Activated CD4-positive, alpha-beta T cell treated with anti-CD3 and anti-CD28 coated beads for 36 hours (primary cell): ENCODE measurements at regions of chr15 and their contacts with region 1.

Region 1: GRCh38 chr15:52558196-52558595 is 10.6 kb downstream of the ARPP19 start:
- DNase-seq: peak; percentile 83
- ATAC-seq: peak; percentile 82
- H3K4me3 Mint-ChIP-seq: peak overlapping the region; percentile 63
- H3K27ac Mint-ChIP-seq: peak overlapping the region; percentile 96
- H3K4me1 Mint-ChIP-seq: peaks cover 66% of the 10 kb centered on the region
- H3K27me3 Mint-ChIP-seq: no peaks in the 10 kb centered on the region

Region 2: DNA sequence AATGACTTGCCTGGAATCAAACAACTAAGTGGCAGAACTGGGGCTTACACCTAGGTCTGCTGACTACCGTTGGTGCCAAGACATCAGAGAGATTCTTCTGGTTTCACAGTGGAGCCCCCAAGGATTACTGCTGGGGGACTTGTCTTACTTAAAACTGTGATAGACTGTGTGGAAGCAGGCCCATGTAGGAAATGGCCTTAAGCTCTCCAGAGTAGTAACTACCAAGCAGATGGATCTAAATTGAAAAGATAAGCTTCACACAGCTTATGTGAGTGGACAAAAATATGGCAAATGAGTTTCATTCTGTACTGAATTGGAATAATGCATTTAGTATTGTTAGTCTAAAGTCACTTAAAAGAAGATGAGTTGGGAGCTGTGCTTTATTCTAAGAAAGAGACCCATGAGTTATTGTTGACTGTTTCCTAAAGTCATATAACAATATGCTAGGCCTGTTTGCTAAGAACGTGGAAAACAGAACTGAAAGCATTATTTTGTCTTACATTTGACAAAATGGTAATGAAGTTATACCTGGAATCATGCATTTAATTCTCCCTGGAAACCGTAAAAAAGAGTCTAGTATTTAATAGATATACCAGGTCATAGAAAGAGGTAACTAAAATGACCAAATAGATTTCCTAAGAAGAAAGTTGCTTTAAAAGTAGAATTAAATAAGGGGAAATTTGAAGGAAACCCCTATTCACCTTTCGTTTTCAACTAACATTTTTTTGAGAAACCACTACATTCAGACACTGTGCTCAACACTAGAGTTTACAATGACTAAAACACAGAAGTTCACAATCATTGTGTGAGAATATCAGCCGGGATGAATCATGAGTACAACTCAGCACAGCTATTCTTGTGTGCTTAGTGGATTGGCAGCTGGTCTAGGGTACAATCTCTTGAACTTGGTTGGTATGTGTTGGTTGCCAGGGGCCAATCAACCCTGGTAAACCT is 552.2 kb before region 1 on chr15:
- CTCF ChIA-PET with region 1: no interaction called
- POLR2A ChIA-PET with region 1: no interaction called
- intact Hi-C with region 1: loop called (anchors 2 to 5 kb)
- DNase-seq: peak; percentile 54
- ATAC-seq: peak; percentile 90
- H3K4me3 Mint-ChIP-seq: peak overlapping the region; percentile 6
- H3K27ac Mint-ChIP-seq: peak overlapping the region; percentile 56
- H3K4me1 Mint-ChIP-seq: peaks cover 64% of the 10 kb centered on the region
- H3K27me3 Mint-ChIP-seq: no peaks in the 10 kb centered on the region

Region 3: DNA sequence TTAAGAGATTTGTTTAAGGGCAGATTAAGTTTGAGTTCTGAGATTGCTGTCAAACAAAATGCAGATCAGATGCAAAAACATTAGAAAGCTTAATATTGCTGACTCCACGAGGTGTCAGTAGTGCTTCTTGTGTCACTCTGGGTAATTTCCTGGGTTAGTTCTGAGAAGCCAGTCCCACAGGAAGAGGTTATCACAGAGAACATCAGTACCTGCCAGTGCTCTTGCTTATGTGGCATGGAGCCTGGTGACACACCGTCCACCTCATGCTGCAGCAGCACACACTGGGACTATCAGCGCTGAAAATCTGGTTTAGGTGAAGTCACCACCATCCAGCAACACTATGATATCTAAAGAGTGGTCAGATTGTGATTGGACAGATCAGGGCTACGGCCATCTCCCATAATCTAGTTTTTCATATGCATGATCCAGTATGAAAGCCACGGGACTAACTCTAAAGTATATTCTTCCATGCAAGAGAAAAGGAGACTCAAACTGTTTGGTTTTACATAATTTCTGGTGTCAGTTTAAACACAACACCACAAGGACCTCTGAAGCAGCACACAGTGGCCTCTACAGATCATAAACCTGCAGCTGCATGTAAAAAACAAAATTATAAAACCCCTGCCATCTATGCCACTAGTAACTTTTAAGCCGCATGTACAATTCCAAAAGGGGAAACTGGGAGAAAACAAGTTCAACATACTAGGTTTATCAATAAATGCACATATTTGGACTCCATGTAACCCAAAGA is 226.5 kb before region 1 on chr15:
- CTCF ChIA-PET with region 1: interaction called, 3 read pairs
- POLR2A ChIA-PET with region 1: no interaction called
- intact Hi-C with region 1: loop called in 1 of 2 experiments (anchors 2 kb)
- DNase-seq: peak; percentile 66
- ATAC-seq: peak; percentile 99
- H3K4me3 Mint-ChIP-seq: no peak overlapping the region
- H3K27ac Mint-ChIP-seq: peak overlapping the region; percentile 28
- H3K4me1 Mint-ChIP-seq: peaks cover 12% of the 10 kb centered on the region
- H3K27me3 Mint-ChIP-seq: no peaks in the 10 kb centered on the region

Region 4: DNA sequence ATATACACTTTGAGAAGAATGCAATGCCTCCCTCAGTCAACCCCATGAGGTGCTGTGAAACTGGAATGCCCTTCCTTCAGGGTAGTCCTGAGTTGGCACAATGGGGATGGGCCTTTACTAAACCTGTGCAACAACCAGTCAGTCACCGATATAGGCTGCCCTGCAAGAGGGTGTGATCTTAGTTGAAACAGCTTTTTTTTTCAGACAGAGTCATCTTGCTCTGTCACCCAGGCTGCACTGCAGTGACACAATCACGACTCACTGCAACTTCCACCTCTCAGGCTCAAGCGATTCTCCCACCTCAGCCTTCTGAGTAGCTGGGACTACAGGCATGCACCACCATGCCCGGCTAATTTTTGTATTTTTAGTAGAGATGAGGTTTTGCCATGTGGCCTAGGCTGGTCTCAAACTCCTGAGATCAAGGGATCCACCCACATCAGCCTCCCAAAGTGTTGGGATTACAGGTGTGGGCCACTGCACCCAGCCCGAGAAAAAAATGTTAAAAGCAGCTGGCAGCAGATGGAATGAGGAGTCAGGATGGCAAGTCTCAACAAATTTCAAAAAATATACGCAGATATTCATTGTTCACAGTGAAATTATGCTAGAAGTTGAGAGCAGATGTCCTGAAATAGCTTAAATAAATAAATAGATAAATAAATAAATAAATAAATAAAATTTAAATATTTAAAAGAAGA is 61.3 kb before region 1 on chr15:
- CTCF ChIA-PET with region 1: interaction called, 4 read pairs
- POLR2A ChIA-PET with region 1: no interaction called
- intact Hi-C with region 1: loop called in 1 of 2 experiments (anchors 2 kb)
- DNase-seq: peak; percentile 78
- ATAC-seq: peak; percentile 100
- H3K4me3 Mint-ChIP-seq: no peak overlapping the region
- H3K27ac Mint-ChIP-seq: no peak overlapping the region
- H3K4me1 Mint-ChIP-seq: peaks cover 19% of the 10 kb centered on the region
- H3K27me3 Mint-ChIP-seq: no peaks in the 10 kb centered on the region

Region 5: GRCh38 chr15:52540374-52541012 is 17.7 kb before region 1 on chr15:
- CTCF ChIA-PET with region 1: no interaction called
- POLR2A ChIA-PET with region 1: no interaction called
- intact Hi-C with region 1: no loop called
- DNase-seq: no peak
- ATAC-seq: no peak
- H3K4me3 Mint-ChIP-seq: no peak overlapping the region
- H3K27ac Mint-ChIP-seq: no peak overlapping the region
- H3K4me1 Mint-ChIP-seq: peaks cover 3% of the 10 kb centered on the region
- H3K27me3 Mint-ChIP-seq: no peaks in the 10 kb centered on the region

Region 6: GRCh38 chr15:52568601-52569256 is 10.5 kb after region 1 on chr15 and contains the start of gene ARPP19:
- CTCF ChIA-PET with region 1: interaction called, 4 read pairs
- POLR2A ChIA-PET with region 1: interaction called, 10 read pairs
- intact Hi-C with region 1: loop called (anchors 1 kb)
- DNase-seq: peak; percentile 90
- ATAC-seq: peak; percentile 83
- H3K4me3 Mint-ChIP-seq: peak within 1 kb of the TSS; percentile 96
- H3K27ac Mint-ChIP-seq: peak within 1 kb of the TSS; percentile 97
- H3K4me1 Mint-ChIP-seq: peaks cover 27% of the 10 kb centered on the region
- H3K27me3 Mint-ChIP-seq: no peaks in the 10 kb centered on the region
- total RNA-seq, gene ARPP19: 141 to 185 TPM

Region 7: DNA sequence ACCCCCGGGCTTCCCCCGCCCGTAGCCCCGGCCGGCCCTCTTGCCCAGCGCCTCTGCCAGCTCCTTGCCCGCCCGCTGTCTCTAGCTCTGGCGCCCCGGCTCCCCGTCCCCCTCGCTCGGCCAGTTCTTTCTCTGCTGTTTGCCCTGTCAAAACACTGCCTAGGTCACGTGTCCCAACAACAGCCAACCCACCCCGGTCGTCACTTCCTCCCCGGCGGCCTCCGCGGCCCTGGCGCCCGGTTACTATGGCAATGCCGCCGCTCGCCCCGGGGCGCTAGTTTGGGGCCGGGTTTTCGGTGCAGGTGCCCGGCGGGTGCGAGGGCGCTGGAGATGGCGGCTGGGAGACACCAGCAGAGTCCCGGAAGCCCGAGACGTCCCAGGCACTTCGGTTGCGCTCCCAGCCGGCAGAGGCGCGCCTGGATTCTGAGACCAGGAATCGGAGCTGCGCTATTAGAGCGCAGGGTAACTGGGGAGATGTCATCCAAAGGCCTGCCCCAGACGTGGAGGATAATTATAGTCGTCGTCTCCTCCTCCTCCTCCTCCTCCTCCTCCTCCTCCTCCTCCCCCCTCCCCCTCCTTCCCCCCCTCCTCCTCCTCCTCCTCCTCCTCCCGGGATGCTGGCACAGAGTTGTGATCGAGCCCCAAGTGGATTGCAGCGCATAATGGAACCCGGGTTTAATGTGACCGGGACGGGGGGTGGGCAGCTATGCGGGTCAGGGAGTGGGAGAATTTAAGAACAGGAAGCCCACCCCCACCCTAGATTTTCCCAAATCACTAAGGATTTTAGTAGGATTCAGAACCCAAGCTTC is 121.2 kb after region 1 on chr15 and contains the start of gene ATOSA:
- CTCF ChIA-PET with region 1: no interaction called
- POLR2A ChIA-PET with region 1: interaction called, 5 read pairs
- intact Hi-C with region 1: loop called (anchors 1 to 2 kb)
- DNase-seq: peak; percentile 95
- ATAC-seq: peak; percentile 85
- H3K4me3 Mint-ChIP-seq: peak within 1 kb of the TSS; percentile 99
- H3K27ac Mint-ChIP-seq: peak within 1 kb of the TSS; percentile 97
- H3K4me1 Mint-ChIP-seq: peaks cover 45% of the 10 kb centered on the region
- H3K27me3 Mint-ChIP-seq: no peaks in the 10 kb centered on the region
- total RNA-seq, gene ATOSA: 13.4 to 13.5 TPM